ENCODE measurements at regions of chr19 and their contacts with region 1.

Region 1: GRCh38 chr19:35822579-35822978 is 9.9 kb upstream of the PRODH2 start:
- DNase-seq: no peak
- ATAC-seq: no peak
- H3K4me3 ChIP-seq: no peak overlapping the region
- H3K27ac ChIP-seq: no peak overlapping the region
- H3K4me1 ChIP-seq: no peaks in the 10 kb centered on the region
- H3K27me3 ChIP-seq: no peaks in the 10 kb centered on the region

Region 2: DNA sequence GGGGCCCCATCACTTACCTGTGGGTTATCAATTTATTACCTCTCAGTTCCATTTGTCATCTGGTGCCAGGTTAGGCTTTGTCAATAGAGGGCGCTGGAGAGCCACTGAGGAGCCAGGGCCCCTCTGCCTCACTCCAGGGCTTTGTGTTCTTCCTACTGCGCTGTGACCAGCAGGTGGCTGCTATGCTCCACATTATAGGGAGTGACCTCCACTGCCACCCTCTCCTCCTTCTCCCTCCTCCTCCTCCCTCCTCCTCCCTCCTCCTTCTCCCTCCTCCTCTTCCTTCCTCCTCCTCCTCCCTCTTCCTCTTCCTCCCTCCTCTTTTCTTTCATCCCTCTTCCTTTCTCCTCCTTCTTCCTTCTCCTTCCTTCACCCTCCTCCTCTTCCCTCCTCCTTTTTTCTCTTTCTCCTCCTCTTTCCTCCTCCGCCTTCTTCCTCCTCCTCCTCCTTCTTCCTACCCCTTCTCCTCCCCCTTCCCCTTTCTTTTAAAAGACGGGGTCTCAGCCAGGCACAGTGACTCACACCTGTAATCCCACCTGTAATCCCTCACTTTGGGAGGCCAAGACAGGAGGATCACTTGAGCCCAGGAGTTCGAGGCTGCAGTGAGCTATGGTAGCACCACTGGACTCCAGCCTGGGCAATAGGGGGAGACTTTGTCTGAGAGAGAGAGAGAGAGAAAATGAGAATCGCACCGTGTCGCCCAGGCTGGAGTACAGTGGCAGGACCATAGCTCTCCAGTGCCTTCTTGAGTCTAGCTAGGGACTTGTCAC is 128.6 kb before region 1 on chr19:
- intact Hi-C with region 1: loop called in 1 of 4 experiments (anchors 5 kb)
- DNase-seq: peak; percentile 88 to 94 (median 91)
- ATAC-seq: peak; percentile 99
- H3K4me3 ChIP-seq: no peak overlapping the region
- H3K27ac ChIP-seq: no peak overlapping the region
- H3K4me1 ChIP-seq: no peaks in the 10 kb centered on the region
- H3K27me3 ChIP-seq: no peaks in the 10 kb centered on the region

Region 3: DNA sequence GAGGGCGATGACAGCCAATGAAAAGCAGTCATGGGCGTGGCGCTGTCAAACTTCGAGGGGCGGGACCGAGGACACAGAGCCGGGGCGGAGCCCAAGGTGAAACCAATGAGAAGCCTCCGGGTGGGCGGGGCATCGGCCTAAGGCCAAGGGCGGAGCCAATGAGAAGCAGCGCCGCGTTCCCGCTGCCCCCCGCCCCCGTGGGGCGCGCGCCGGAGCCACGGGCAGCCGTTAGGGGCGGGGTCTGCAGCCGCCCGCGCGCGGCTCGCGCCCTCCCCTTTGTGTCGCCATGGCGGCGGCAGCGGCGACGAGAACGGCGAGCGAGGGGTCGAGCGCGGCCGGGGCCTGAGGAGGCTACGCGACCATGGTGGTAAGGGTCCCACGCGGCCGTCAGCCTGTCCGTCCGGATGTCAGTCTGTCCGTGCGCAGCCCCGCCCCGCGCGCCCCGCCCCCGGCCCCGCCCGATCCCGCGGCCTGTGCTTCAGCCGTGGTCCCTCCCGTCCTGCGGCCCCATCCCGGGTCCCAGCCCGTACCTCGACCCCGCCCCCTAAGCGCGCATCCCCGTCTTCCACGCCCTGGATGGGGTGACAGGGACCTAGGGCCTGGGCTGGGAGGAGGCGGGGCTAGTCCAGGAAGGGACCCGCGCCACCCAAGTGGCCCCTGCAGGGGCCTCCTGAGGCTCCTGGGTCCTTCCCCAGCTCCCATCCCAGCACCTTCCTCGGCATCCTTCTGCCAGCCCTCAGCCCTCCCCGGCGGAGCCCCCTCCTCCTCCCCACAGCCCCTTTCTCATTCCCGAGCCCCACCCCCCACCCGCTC is 47.1 kb before region 1 on chr19 and contains the start of gene ARHGAP33:
- intact Hi-C with region 1: no loop called
- DNase-seq: peak; percentile 99 to 100 (median 100)
- ATAC-seq: peak; percentile 98 to 99
- H3K4me3 ChIP-seq: peak within 1 kb of the TSS; percentile 97
- H3K27ac ChIP-seq: no peak within 1 kb of the TSS
- H3K4me1 ChIP-seq: peaks cover 4% of the 10 kb centered on the region
- H3K27me3 ChIP-seq: no peaks in the 10 kb centered on the region
- total RNA-seq, gene ARHGAP33: 1.5 to 11.8 (median 4.9) TPM

Region 4: GRCh38 chr19:35786299-35787151 is 36.1 kb before region 1 on chr19:
- intact Hi-C with region 1: no loop called
- DNase-seq: no peak
- ATAC-seq: no peak
- H3K4me3 ChIP-seq: no peak overlapping the region
- H3K27ac ChIP-seq: no peak overlapping the region
- H3K4me1 ChIP-seq: no peaks in the 10 kb centered on the region
- H3K27me3 ChIP-seq: no peaks in the 10 kb centered on the region

Region 5: GRCh38 chr19:35845215-35846037 is 22.8 kb after region 1 on chr19:
- intact Hi-C with region 1: no loop called
- DNase-seq: peak in 2 of 3 donors; percentile 48 to 60
- ATAC-seq: peak; percentile 34 to 52
- H3K4me3 ChIP-seq: peak overlapping the region; percentile 30
- H3K27ac ChIP-seq: no peak overlapping the region
- H3K4me1 ChIP-seq: no peaks in the 10 kb centered on the region
- H3K27me3 ChIP-seq: no peaks in the 10 kb centered on the region